Dorsolateral prefrontal cortex (tissue), 120 donors: ENCODE measurements at regions of chr12 and their contacts with region 1.

Region 1: DNA sequence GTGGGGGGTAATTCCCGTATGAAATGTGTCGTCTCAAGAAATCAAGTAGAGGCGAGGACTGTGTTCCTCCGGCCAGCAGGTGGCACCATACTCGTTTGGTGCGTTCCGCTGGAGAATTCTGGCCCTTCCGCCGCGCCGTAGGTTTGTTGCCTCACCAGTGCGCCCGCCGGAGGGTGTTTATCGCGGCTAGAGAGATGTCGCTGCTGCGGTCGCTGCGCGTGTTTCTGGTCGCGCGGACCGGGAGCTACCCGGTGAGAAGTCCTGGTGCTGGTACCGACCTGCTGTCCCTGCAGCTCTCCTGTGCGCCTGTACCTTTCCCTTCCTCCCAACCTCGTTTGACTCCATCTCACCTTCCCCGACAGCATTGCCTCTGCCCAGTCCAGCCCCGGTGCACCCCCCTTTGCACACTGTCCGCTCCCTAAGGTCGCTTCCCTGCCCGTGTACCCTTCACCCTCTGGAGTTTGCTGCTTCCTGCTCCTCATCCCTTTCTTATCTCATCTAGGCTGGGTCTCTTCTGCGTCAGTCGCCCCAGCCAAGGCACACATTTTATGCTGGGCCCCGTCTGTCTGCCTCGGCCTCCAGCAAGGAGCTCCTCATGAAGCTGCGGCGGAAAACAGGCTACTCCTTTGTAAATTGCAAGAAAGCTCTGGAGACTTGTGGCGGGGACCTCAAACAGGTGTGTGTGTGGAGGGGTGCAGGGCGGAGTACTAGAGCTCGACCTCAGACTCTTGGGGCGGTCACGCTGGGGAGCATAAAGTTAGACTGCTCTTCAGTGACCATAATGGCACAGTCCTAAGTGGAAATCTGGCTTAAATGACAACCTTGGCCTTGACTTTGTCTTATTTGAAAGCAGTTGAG is at the start of gene TSFM:
- DNase-seq: peak; percentile 93 to 98 (median 97)
- H3K4me3 ChIP-seq: peak within 1 kb of the TSS; percentile 48 to 100 (median 93)
- H3K27ac ChIP-seq: peak within 1 kb of the TSS in 47 of 59 donors; percentile 1 to 88 (median 55)
- H3K27me3 ChIP-seq: no peaks in the 10 kb centered on the region
- CTCF ChIP-seq: peak; percentile 95 to 100 (median 99)
- total RNA-seq, gene TSFM: 21.9 to 57.1 (median 35.3) TPM

Region 2: GRCh38 chr12:57771708-57772428 is 11.0 kb before region 1 on chr12 and contains the start of gene METTL1:
- intact Hi-C with region 1: loop called in 1 of 2 experiments (anchors 1 kb)
- DNase-seq: peak; percentile 93 to 98 (median 97)
- H3K4me3 ChIP-seq: peak within 1 kb of the TSS; percentile 58 to 100 (median 90)
- H3K27ac ChIP-seq: peak within 1 kb of the TSS in 56 of 59 donors; percentile 1 to 92 (median 78)
- H3K27me3 ChIP-seq: peaks cover 0 to 6% (median 0%) of the 10 kb centered on the region in 45 donors
- CTCF ChIP-seq: peak in 35 of 56 donors; percentile 6 to 60 (median 23)
- total RNA-seq, gene METTL1: 1.8 to 17.4 (median 8.3) TPM

Region 3: DNA sequence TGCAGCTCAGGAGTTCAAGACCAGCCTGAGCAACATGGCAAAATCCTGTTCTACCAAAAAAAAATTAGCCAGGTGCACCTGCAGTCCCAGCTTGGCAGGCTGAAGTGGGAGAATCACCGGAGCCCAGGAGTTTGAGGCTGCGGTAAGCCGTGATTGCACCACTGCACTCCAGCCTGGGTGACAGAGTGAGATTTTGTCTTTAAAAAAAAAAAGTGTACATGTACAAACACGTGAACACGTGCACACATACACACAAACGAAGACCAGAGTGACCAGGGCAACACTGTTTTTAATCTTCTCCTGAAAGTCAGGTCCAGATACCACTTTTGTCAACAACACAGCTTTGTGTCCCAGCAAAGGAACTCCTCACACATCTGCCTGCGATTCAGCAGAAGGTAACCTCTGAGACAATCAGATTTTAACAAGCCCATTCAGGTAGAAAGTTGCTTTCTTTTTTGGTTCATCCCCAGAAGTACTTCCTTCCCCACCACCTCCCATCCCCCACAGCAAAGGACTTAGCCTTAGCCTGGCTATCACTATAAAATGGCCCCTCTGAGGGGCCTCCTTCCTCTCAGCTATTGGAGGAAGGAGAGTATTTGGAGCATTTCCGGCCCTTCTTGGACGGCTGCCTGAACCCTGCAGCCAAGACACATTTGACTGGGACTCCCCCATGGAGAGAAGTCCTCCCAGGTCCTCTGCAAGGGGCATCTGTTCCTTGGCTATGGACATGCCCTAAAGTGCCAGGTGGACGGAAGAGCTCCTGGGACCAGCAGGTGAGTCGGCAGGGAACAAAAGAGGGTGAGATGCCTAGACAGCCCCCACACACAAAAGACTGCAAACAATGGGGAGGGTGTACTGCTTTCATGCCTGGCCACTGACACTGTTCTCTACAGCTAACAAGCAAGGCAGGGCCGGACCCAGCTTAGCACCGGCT is 53.9 kb after region 1 on chr12:
- intact Hi-C with region 1: loop called in 1 of 2 experiments (anchors 5 kb)
- DNase-seq: peak in 3 of 10 donors; percentile 28 to 92 (median 55)
- H3K4me3 ChIP-seq: peak overlapping the region in 49 of 59 donors; percentile 0 to 50 (median 28)
- H3K27ac ChIP-seq: peak overlapping the region in 52 of 59 donors; percentile 13 to 100 (median 60)
- H3K27me3 ChIP-seq: no peaks in the 10 kb centered on the region
- CTCF ChIP-seq: no peak

Region 4: DNA sequence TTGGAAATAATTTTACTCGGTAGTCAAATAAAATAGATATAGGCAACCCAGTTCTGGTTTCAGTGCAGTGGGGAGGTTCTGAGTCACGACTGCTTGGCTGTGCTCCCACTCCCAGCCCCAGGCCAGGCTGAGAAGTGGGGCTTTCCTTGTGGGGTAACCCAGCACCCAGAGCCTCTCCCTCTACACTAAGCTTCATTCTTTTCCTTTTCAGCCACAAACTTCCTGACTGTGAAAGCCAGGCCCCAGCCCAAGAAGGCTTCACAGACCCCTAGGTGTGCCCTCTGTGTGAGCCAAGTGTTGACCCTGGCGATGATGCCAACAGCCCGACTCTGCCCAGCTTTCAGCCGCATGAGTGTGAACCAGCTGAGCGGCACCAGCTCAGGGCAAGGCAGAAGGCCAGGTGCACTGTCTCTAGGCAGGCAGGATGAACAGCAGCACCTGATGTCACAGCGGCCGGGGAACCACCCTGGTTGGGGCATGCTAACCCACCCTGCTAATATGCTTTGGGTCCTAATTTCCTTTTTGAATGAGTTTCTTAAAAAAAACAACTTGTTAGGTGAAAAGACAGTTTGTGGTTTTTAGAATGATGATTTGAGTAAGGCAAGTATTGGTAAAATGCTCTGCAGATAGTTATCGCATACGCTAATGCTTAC is 116.3 kb after region 1 on chr12:
- intact Hi-C with region 1: loop called in 1 of 2 experiments (anchors 5 kb)
- DNase-seq: peak in 1 of 10 donors; percentile 40
- H3K4me3 ChIP-seq: no peak overlapping the region
- H3K27ac ChIP-seq: peak overlapping the region in 41 of 59 donors; percentile 3 to 100 (median 98)
- H3K27me3 ChIP-seq: no peaks in the 10 kb centered on the region
- CTCF ChIP-seq: no peak

Region 5: GRCh38 chr12:57904848-57905811 is 122.3 kb after region 1 on chr12:
- intact Hi-C with region 1: loop called in 1 of 2 experiments (anchors 5 kb)
- DNase-seq: peak; percentile 67 to 88 (median 82)
- H3K4me3 ChIP-seq: peak overlapping the region in 53 of 59 donors; percentile 6 to 58 (median 39)
- H3K27ac ChIP-seq: peak overlapping the region in 25 of 59 donors; percentile 4 to 75 (median 43)
- H3K27me3 ChIP-seq: no peaks in the 10 kb centered on the region
- CTCF ChIP-seq: peak; percentile 96 to 100 (median 100)

Region 6: DNA sequence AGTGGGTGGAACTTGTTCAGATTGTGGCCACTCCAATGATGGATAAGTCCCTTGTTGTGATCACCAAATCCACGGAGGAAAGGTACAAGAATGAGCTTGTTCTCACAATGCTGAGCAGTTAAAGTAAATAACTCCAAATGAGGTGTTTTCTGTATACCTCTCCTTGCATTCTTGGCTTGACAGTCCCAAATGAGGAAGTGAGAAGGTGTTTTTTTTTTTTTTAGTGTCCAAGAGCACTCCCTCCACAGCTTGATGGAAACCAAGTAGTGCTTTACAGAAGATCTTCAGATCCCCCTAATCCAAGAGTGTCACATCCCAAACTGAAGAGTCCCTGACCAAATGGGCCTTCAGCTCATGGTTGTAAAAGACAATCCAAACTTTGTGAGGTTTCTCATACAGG is 312.2 kb after region 1 on chr12:
- intact Hi-C with region 1: no loop called
- DNase-seq: no peak
- H3K4me3 ChIP-seq: no peak overlapping the region
- H3K27ac ChIP-seq: no peak overlapping the region
- H3K27me3 ChIP-seq: peaks cover 0 to 65% (median 0%) of the 10 kb centered on the region in 45 donors
- CTCF ChIP-seq: no peak